MCF 10A (cell line): ENCODE measurements at regions of chr1 and their contacts with region 1.

Region 1: GRCh38 chr1:77888081-77888780 is at the start of gene NEXN:
- DNase-seq: peak; percentile 41
- H3K4me3 Mint-ChIP-seq: peak within 1 kb of the TSS; percentile 78
- H3K27ac Mint-ChIP-seq: peak within 1 kb of the TSS; percentile 6
- H3K4me1 Mint-ChIP-seq: peaks cover 6% of the 10 kb centered on the region
- H3K27me3 Mint-ChIP-seq: no peaks in the 10 kb centered on the region
- CTCF ChIP-seq: no peak
- total RNA-seq, gene NEXN: 1.6 and 1.8 TPM in 2 replicates

Region 2: GRCh38 chr1:77825131-77825709 is 63.0 kb before region 1 on chr1:
- CTCF ChIA-PET with region 1: interaction called, 6 read pairs
- POLR2A ChIA-PET with region 1: interaction called, 13 read pairs
- intact Hi-C with region 1: loop called (anchors 10 kb)
- DNase-seq: peak; percentile 91
- H3K4me3 Mint-ChIP-seq: peak overlapping the region; percentile 29
- H3K27ac Mint-ChIP-seq: peak overlapping the region; percentile 90
- H3K4me1 Mint-ChIP-seq: peaks cover 6% of the 10 kb centered on the region
- H3K27me3 Mint-ChIP-seq: no peaks in the 10 kb centered on the region
- CTCF ChIP-seq: peak; percentile 24

Region 3: DNA sequence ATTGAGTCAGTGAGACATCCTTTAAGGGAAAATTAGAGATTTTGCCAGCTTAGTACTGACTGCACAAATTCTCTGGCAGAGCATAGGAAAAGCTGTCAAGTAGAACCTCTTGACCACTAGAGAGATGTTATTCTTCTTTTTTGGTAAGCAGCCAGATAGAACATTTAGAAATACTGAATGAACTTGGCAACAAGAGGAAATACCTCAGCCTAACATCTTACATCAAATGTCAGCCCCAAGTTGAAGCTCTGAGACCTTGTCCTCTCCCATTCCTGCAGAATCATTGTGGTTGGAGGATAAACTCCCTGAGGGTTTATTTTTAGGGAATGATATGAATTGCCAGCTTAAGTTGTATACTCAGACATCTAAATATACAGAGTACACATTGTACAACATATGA is 55.3 kb before region 1 on chr1:
- CTCF ChIA-PET with region 1: no interaction called
- POLR2A ChIA-PET with region 1: interaction called, 15 read pairs
- intact Hi-C with region 1: loop called (anchors 10 kb)
- DNase-seq: peak; percentile 92
- H3K4me3 Mint-ChIP-seq: peak overlapping the region; percentile 6
- H3K27ac Mint-ChIP-seq: peak overlapping the region; percentile 96
- H3K4me1 Mint-ChIP-seq: peaks cover 46% of the 10 kb centered on the region
- H3K27me3 Mint-ChIP-seq: no peaks in the 10 kb centered on the region
- CTCF ChIP-seq: no peak

Region 4: DNA sequence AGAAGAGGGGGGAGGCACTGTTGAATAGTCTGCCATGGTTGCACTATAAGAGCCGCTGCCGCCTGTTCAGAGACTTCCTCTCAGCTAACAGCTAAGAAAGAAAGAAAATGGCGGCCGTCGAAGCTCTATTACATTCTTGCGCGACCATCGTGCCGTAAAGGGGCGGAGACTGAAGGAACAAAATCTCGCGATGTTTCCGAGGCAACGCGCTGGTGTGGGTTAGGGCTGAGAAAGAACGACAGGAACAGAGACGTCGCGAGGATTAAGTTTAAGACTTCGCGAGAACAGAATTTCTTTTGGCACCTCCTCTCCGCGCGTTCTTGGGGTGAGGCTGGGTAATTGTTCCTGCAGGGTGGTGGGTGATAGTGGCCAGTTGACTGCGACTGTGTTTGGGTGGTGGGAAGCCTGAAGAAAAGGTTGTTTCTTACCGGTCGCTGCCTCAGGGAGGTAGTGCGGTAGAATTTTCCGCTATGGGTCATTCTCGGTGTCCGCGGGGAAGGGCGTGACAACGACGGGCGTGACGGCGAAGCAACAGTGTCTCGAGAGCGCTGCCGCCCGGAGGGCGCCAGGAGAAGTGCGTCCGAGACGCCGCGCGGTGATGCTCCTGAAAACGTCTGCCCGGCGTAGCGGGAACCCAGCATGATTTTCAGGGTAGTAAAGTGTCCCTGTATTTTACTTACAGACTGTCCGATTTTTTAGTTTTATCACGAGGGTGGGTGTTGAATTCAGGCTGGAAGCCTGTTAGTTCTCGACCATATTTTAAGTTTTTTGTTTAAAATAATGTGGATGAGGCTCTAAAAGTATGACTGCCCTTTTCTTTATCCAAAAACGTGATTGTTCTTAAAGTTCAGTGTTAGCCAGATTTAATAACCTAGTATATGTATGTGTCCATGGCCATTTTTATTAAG is 91.0 kb after region 1 on chr1 and contains the start of gene FUBP1:
- CTCF ChIA-PET with region 1: no interaction called
- POLR2A ChIA-PET with region 1: no interaction called
- intact Hi-C with region 1: no loop called
- DNase-seq: peak; percentile 99
- H3K4me3 Mint-ChIP-seq: no peak within 1 kb of the TSS
- H3K27ac Mint-ChIP-seq: no peak within 1 kb of the TSS
- H3K4me1 Mint-ChIP-seq: peaks cover 23% of the 10 kb centered on the region
- H3K27me3 Mint-ChIP-seq: no peaks in the 10 kb centered on the region
- CTCF ChIP-seq: peak; percentile 68
- total RNA-seq, gene FUBP1: 156 and 169 TPM in 2 replicates